Heart right ventricle (tissue), 16 donors: ENCODE measurements at regions of chr11 and their contacts with region 1.

Region 1: DNA sequence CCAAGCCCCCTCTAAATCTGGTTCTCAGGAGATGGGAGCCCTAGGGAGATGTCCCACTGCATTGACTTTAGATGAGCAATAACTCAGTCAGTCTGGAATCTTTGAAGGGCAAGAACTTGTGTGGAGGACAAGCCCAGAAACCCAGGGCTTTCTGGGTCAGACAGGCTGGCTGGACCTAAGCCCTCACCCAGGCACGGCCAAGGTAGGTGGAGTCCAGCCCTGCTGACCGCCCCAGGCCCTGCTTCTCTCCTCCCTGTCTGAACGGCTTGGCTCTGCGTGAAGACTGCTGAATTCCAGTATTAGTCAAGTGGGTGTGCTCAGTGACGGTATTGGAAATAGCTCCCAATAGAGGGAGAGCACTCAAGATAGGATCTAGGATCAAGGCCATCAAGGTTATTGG is 6.1 kb downstream of the CXCR5 start:
- DNase-seq: peak; percentile 59 to 73
- ATAC-seq: peak; percentile 68 to 91 (median 84)
- H3K4me3 ChIP-seq: no peak overlapping the region
- H3K27ac ChIP-seq: peak overlapping the region in 7 of 10 donors; percentile 7 to 67 (median 37)
- H3K4me1 ChIP-seq: peaks cover 13 to 34% (median 28%) of the 10 kb centered on the region in 9 donors
- H3K27me3 ChIP-seq: no peaks in the 10 kb centered on the region
- CTCF ChIP-seq: no peak

Region 2: DNA sequence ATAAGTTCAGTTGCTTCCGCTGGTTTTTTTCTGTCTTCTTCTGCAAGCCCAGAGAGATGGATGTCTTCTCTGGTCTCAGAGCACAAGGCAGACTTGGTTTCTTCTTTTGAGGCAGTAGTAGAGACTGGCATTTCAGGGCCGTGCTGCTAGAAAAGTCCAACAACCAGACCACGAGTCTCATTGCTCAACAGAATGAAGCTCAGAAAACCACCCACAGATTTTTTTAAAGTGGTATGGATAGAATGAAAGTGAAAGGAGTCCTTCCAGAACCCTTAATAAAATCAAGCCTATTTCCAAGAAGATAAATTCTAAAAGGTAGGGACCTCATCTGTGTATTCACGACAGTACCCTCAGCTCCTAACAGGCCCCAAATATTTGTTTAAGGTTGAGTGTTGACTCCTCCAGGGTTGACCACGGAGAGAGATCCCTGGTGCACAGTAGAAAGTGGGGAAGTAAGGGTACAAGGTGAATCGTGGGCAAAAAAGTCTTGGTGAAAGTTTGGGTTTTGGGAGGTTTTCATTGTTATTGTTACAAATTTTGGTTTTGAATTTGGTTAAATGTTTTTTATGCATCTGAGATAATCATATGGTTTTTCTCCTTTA is 55.3 kb before region 1 on chr11:
- intact Hi-C with region 1: loop called in 1 of 10 experiments (anchors 5 kb)
- DNase-seq: no peak
- ATAC-seq: no peak
- H3K4me3 ChIP-seq: no peak overlapping the region
- H3K27ac ChIP-seq: peak overlapping the region in 1 of 10 donors; percentile 28
- H3K4me1 ChIP-seq: peaks cover 0 to 9% (median 0%) of the 10 kb centered on the region in 9 donors
- H3K27me3 ChIP-seq: no peaks in the 10 kb centered on the region
- CTCF ChIP-seq: no peak

Region 3: GRCh38 chr11:118928108-118928870 is 38.5 kb after region 1 on chr11:
- intact Hi-C with region 1: loop called in 1 of 10 experiments (anchors 5 kb)
- DNase-seq: peak; percentile 89 to 94
- ATAC-seq: peak; percentile 73 to 86 (median 81)
- H3K4me3 ChIP-seq: peak overlapping the region; percentile 55 to 90 (median 76)
- H3K27ac ChIP-seq: peak overlapping the region; percentile 94 to 100 (median 97)
- H3K4me1 ChIP-seq: peaks cover 12 to 49% (median 37%) of the 10 kb centered on the region in 9 donors
- H3K27me3 ChIP-seq: no peaks in the 10 kb centered on the region
- CTCF ChIP-seq: peak; percentile 83 to 97 (median 94)

Region 4: GRCh38 chr11:118939953-118940598 is 50.3 kb after region 1 on chr11:
- intact Hi-C with region 1: loop called in 1 of 10 experiments (anchors 5 kb)
- DNase-seq: no peak
- ATAC-seq: peak in 7 of 8 donors; percentile 27 to 67 (median 49)
- H3K4me3 ChIP-seq: no peak overlapping the region
- H3K27ac ChIP-seq: no peak overlapping the region
- H3K4me1 ChIP-seq: peaks cover 0 to 11% (median 0%) of the 10 kb centered on the region in 9 donors
- H3K27me3 ChIP-seq: peaks cover 0 to 9% (median 4%) of the 10 kb centered on the region in 7 donors
- CTCF ChIP-seq: no peak